Right ventricle myocardium inferior (tissue), 1 donor: ENCODE measurements at regions of chr1 and their contacts with region 1.

Region 1: DNA sequence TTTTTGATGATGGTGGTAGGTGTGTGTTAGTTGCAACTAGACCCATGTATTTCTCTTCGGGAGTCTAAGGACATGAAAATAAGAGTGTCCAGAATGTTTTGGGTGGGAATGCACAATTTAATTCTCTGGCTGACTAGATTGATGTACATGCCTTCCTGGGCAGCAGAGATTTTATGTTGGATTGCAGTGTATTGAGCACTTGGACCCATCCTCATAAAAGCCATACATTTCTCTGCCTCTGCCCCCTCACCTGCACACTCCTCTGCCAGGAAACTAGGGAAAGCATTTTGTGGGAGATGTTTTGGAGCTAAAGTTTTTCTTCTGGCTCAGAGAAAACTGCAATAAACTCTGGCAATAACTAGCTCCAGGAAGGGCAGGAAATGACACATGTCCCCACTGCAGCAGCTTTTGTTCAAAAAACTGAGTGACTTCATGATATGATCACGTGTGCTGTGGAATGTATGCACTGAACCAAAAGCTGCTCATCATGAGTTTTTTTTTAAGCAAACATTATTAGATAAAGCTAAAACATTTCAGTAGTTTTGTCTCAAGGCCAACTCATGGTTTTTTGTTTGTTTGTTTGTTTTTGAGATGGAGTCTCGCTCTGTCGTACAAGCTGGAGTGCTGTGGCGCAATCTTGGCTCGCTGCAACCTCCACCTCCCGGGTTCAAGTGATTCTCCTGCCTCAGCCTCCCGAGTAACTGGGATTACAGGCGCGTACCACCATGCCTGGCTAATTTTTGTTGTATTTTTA is 17.6 kb downstream of the RIT1 start:
- DNase-seq: no peak
- ATAC-seq: no peak

Region 2: DNA sequence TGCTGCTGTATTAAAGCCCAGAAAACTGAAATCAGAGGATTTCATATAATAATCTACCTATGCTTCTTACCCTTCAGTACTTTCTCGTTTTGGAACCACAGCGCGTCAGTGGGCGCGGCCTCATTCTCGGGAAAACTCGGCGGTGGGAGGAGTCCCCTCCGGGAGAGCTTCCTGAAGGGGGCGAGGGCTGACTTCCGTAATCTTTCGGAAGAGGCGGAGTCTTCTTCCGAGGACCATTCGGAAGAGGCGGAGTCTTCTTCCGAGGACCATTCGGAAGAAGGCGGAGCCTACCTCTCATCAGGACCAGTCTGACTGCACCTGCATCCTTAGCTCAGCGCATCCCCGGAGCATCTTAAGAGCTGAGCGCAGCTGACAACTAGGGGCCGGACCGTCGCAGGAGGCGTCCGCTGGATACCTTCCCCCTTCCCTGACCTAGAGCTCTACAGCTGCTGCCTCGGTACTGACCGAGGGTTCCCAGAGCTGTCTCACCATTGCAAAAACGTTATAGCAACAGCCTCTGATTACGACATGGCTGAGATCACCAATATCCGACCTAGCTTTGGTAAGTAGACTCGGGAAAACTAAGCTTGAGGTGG is 34.2 kb before region 1 on chr1 and contains the start of gene SYT11:
- intact Hi-C with region 1: loop called (anchors 2 kb)
- DNase-seq: peak; percentile 96
- ATAC-seq: peak; percentile 91
- total RNA-seq, gene SYT11: 9.2 TPM